Activated naive CD4-positive, alpha-beta T cell treated with anti-CD3 and anti-CD28 coated beads, Interleukin-2, amount 10 ng/mL, durations not matched to agents 7 days and 5 days (primary cell): ENCODE measurements at regions of chr2 and their contacts with region 1.

Region 1: DNA sequence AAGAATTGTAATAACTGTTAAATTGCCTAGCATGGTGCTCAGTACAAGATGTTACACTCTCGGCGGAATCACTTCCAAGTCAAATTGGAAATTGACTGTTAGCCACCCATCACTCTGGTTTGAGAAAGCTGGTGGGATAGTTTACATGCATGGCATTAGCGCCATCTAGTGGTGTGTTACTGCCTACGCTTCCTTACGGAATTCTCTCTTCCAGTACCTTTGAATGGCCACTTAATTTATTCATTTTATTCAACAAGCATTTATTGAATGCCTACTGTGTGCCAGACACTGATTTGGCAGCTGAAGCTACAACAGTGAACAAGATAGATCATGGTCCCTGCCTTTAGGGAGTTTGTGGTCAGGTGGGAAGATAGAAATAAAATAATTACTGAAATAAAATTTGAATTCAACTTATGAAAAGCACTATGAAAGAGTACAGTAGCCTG is 171.2 kb downstream of the TMEM247 start:
- DNase-seq: peak; percentile 78
- H3K4me3 Mint-ChIP-seq: no peak overlapping the region
- H3K27ac Mint-ChIP-seq: no peak overlapping the region
- H3K4me1 Mint-ChIP-seq: no peaks in the 10 kb centered on the region
- H3K27me3 Mint-ChIP-seq: peaks cover 15% of the 10 kb centered on the region

Region 2: GRCh38 chr2:46329803-46330775 is 320.5 kb before region 1 on chr2:
- CTCF ChIA-PET with region 1: no interaction called
- DNase-seq: no peak
- H3K4me3 Mint-ChIP-seq: no peak overlapping the region
- H3K27ac Mint-ChIP-seq: no peak overlapping the region
- H3K4me1 Mint-ChIP-seq: peaks cover 17% of the 10 kb centered on the region
- H3K27me3 Mint-ChIP-seq: peaks cover 52% of the 10 kb centered on the region

Region 3: GRCh38 chr2:46470114-46470628 is 180.4 kb before region 1 on chr2:
- CTCF ChIA-PET with region 1: interaction called, 10 read pairs
- DNase-seq: no peak
- H3K4me3 Mint-ChIP-seq: no peak overlapping the region
- H3K27ac Mint-ChIP-seq: no peak overlapping the region
- H3K4me1 Mint-ChIP-seq: no peaks in the 10 kb centered on the region
- H3K27me3 Mint-ChIP-seq: peaks cover 26% of the 10 kb centered on the region

Region 4: DNA sequence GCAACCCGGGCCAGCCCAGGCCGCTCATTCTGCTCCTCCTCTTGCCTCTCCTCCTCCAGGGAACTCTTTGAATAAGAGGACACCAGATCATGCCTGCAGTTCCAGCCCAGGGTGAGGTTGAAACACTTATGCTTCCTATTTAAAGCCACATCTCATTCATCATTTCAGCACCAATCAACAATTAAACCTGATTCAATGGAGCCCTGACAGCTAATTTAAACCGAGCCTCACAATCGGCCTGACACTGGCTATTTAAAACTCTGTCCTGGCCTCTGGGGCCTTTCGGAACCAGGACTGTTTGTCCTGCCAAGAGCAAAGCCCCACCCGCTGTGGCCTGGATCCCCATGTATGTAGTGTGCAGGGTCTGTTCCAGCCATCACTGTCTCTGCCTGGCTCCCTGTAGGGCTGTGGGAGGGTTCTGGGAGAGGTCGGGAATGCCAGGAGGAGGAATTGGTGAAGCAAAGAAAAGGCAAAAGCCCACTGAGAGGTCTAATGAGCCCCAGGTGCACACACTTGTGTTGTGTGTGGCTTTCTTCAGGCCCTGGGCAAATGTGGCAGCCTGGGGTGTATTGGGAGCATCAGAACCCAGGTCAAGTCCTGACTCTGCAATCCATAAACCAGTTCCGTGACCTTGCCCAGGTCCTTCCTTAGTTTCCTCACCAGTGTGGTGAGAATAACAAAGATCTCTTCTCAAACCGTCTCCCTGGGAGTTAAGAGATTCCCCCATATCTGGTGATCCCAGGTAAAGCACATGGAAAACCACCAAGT is 167.7 kb after region 1 on chr2:
- CTCF ChIA-PET with region 1: no interaction called
- DNase-seq: no peak
- H3K4me3 Mint-ChIP-seq: no peak overlapping the region
- H3K27ac Mint-ChIP-seq: no peak overlapping the region
- H3K4me1 Mint-ChIP-seq: no peaks in the 10 kb centered on the region
- H3K27me3 Mint-ChIP-seq: peaks cover 34% of the 10 kb centered on the region